AG04449 (cell line): ENCODE measurements at regions of chr11 and their contacts with region 1.

Region 1: DNA sequence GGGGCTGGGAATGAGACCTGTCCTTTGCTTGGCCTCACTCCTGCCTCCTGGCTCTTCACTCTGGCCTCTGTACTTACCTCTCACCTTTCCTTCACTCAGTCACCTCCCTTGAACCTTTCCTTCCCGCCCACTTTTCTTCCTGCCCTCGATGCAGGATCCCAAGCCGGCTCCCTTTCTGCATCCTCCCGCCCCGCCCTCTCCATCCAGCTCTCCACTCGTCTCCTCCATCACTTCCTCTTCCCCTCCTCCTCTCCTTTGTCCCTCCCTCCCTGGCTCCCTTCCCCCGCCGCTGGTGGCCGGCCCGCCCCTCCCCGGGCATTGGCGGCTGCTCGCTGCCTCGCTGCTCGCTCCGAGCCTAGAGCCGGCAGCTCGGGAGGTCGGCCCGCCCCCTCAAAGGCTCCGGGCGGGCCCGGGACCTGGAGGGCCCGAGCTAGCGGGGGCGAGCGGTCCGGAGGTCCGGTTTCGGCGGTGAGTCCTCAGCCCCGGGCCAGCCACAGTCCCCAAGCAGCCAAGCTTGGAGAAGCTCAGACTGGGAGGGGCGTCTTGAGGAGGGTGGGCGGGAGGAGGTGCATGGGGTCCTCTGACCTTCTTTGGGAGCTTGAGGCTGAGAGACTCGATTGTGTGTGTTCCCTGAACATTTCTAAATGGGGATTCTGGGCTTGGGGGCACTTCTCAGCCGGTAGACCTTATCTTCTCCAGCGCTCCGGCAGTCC is 13.8 kb downstream of the PHLDB1 start:
- DNase-seq: peak; percentile 40
- H3K4me3 ChIP-seq: peak overlapping the region; percentile 78
- CTCF ChIP-seq: no peak

Region 2: GRCh38 chr11:118581057-118581456 is 40.2 kb before region 1 on chr11:
- CTCF ChIA-PET with region 1: no interaction called
- POLR2A ChIA-PET with region 1: no interaction called
- DNase-seq: no peak
- H3K4me3 ChIP-seq: no peak overlapping the region
- CTCF ChIP-seq: no peak

Region 3: GRCh38 chr11:118610804-118611795 is 10.1 kb before region 1 on chr11:
- CTCF ChIA-PET with region 1: interaction called, 138 read pairs
- POLR2A ChIA-PET with region 1: interaction called, 172 read pairs
- DNase-seq: no peak
- H3K4me3 ChIP-seq: peak overlapping the region; percentile 80
- CTCF ChIP-seq: peak; percentile 92

Region 4: DNA sequence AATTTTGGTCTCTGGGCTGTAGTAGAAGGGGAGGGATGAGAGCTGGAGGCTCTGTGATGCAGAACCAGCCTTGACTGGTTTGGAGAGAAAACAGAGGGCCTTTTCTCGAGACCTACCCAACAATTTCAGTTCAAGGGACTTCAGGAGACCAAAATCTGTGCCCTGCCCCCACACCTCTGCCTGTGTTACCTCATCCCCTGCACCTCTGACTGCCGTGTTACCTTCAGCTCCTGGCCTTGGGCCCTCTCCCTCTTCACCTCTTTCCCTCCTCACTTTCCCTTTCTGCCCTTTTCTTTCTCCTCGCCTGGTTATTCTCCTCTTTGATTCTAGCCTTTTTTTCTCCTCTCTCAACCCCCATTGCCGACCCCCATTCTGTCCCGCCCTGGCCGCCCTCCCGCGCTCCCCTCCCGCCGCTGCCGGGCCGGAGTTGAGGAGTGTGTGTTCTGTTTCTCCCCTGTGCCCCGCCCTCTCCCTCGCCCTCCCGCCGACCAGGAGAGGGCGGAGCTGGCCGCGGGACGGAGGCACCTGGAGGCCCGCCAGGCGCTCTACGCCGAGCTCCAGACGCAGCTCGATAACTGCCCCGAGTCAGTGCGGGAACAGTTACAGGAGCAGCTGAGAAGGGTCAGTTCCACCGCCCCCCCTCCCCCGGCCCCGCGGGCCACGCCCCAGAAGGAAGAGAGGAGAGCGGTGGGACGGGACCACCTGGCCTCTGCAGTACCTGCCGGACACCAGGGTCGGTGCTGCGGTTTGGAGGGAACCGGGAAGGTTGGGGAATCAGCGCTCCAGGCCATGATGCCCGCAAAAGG is 13.4 kb after region 1 on chr11:
- CTCF ChIA-PET with region 1: interaction called, 14 read pairs
- POLR2A ChIA-PET with region 1: interaction called, 32 read pairs
- DNase-seq: no peak
- H3K4me3 ChIP-seq: no peak overlapping the region
- CTCF ChIP-seq: no peak